AG04450 (cell line): ENCODE measurements at regions of chr11 and their contacts with region 1.

Region 1: DNA sequence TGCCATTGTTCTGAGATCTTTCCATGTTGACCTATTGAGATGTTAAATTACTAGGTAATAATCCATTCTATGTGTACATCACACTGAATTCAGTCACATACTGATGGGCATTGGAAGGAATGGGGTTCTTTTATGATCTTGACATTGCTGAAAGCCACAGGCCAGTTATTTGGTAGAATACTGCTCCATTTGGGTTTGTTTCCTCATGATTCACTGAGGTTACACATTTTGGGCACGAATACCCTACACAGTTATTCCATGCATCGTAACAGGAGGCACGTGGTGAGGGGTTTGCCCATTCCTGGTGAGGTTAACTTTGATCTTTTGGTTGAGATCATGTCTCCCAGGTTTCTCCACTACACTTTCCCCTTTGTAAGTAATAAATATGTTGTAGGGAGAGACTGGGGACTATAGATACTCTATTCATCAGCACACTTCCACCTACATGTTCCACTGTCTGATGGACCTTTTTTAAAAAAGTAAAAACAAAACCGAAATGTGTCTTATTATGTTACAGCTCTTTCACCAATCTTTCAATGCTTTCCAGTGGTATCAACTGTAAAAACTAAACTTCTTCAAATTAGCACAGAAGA is 12.0 kb upstream of the FOLR1 start:
- DNase-seq: no peak
- H3K4me3 ChIP-seq: no peak overlapping the region
- H3K27ac ChIP-seq: no peak overlapping the region
- H3K27me3 ChIP-seq: no peaks in the 10 kb centered on the region
- CTCF ChIP-seq: no peak

Region 2: DNA sequence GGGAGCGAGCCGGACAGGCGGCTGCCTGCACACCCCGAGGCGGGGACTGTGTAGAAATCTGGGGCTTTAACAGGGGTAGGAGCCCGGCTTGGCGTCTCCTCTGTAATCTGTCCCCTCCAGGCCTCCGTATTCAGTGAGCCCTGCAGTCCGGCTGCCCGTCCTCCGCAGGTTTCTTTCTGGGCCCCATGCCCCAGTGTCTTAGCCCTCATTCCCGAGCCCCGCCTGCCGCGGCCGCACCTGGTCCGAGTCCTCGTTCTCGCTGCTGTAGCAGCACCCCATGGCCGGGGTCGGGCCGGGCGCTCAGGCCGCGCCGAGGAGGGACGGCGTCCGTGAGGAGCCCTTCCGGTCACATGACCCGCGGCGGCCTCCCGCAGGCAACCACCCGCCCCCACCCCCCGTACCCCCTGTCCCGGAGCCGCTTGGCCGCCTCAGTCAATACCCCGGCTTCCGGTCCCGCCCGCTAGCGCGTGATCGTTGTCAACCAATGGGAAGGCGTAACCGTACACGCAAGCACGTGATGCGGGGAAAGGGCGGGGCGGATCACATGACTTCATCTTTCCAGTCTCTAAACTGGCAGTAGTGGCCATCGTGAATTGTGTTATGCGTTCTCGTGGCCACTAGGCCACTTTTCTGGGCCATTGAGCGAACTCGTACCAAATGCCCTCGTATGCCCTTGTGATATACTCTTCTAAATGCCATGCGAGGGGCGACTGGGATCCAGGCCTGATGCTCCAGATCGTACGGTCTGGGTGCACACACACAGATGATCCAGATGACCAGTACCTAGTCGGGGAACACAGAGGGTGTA is 76.8 kb before region 1 on chr11 and contains the start of gene LAMTOR1:
- CTCF ChIA-PET with region 1: interaction called, 15 read pairs
- POLR2A ChIA-PET with region 1: interaction called, 6 read pairs
- DNase-seq: peak; percentile 98
- H3K4me3 ChIP-seq: peak within 1 kb of the TSS; percentile 82
- H3K27ac ChIP-seq: peak within 1 kb of the TSS; percentile 90
- H3K27me3 ChIP-seq: no peaks in the 10 kb centered on the region
- CTCF ChIP-seq: peak; percentile 46
- polyA plus RNA-seq, gene LAMTOR1: 89.1 and 120 TPM in 2 replicates

Region 3: GRCh38 chr11:72141066-72141465 is 38.8 kb before region 1 on chr11:
- CTCF ChIA-PET with region 1: interaction called, 25 read pairs
- POLR2A ChIA-PET with region 1: interaction called, 7 read pairs
- DNase-seq: peak; percentile 69
- H3K4me3 ChIP-seq: no peak overlapping the region
- H3K27ac ChIP-seq: peak overlapping the region; percentile 80
- H3K27me3 ChIP-seq: no peaks in the 10 kb centered on the region
- CTCF ChIP-seq: no peak

Region 4: DNA sequence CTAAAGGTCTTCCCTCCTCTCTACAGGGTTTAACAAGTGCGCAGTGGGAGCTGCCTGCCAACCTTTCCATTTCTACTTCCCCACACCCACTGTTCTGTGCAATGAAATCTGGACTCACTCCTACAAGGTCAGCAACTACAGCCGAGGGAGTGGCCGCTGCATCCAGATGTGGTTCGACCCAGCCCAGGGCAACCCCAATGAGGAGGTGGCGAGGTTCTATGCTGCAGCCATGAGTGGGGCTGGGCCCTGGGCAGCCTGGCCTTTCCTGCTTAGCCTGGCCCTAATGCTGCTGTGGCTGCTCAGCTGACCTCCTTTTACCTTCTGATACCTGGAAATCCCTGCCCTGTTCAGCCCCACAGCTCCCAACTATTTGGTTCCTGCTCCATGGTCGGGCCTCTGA is 16.0 kb after region 1 on chr11:
- CTCF ChIA-PET with region 1: interaction called, 14 read pairs
- POLR2A ChIA-PET with region 1: no interaction called
- DNase-seq: no peak
- H3K4me3 ChIP-seq: no peak overlapping the region
- H3K27ac ChIP-seq: no peak overlapping the region
- H3K27me3 ChIP-seq: no peaks in the 10 kb centered on the region
- CTCF ChIP-seq: no peak

Region 5: GRCh38 chr11:72209101-72209500 is 29.2 kb after region 1 on chr11:
- CTCF ChIA-PET with region 1: interaction called, 14 read pairs
- POLR2A ChIA-PET with region 1: no interaction called
- DNase-seq: no peak
- H3K4me3 ChIP-seq: no peak overlapping the region
- H3K27ac ChIP-seq: no peak overlapping the region
- H3K27me3 ChIP-seq: peaks cover 19% of the 10 kb centered on the region
- CTCF ChIP-seq: no peak

Region 6: GRCh38 chr11:72585762-72586311 is 405.9 kb after region 1 on chr11:
- CTCF ChIA-PET with region 1: no interaction called
- POLR2A ChIA-PET with region 1: no interaction called
- DNase-seq: peak; percentile 10
- H3K4me3 ChIP-seq: no peak overlapping the region
- H3K27ac ChIP-seq: no peak overlapping the region
- H3K27me3 ChIP-seq: peaks cover 74% of the 10 kb centered on the region
- CTCF ChIP-seq: peak; percentile 84